ENCODE measurements at regions of chr3 and their contacts with region 1.

Region 1: DNA sequence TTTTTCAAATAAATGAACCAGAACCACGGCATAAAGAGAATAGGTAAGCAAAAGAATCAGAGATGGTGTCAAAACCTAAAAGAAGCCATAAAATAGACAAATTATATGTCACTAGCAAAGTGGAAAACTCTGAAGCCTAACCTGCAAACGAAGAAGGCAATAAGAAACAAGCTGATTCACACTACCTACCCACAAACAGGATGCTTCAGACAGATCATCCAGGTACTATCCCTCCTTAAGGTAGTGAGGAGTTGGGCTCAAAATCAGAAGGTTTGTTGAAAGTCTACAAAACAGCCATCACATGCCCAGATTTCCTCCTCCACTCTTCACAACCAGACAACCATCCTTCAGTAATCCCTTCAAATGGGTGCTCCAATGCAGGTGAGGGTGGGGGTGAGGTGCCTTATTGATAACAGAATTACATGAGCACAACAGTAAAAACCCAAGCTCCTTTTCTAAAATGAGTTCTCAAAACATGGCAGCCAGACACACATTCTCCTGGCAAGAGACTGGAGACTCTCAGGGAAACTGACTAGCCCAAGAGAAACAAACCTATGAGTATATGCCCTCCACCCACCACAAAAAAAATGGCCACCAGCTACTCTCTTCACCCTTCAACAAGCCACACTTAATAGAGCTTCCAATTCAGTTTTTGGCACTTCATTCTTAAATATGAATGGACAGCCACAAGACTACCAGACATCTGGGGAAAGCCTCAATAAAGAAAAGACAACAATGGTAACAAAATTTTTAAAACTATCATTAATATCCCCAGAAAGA is 6.4 kb downstream of the KPNA1 start:
- DNase-seq: no peak
- H3K4me3 ChIP-seq: no peak overlapping the region
- H3K27ac ChIP-seq: no peak overlapping the region
- H3K4me1 ChIP-seq: peaks cover 15% of the 10 kb centered on the region
- H3K27me3 ChIP-seq: no peaks in the 10 kb centered on the region
- CTCF ChIP-seq: no peak

Region 2: DNA sequence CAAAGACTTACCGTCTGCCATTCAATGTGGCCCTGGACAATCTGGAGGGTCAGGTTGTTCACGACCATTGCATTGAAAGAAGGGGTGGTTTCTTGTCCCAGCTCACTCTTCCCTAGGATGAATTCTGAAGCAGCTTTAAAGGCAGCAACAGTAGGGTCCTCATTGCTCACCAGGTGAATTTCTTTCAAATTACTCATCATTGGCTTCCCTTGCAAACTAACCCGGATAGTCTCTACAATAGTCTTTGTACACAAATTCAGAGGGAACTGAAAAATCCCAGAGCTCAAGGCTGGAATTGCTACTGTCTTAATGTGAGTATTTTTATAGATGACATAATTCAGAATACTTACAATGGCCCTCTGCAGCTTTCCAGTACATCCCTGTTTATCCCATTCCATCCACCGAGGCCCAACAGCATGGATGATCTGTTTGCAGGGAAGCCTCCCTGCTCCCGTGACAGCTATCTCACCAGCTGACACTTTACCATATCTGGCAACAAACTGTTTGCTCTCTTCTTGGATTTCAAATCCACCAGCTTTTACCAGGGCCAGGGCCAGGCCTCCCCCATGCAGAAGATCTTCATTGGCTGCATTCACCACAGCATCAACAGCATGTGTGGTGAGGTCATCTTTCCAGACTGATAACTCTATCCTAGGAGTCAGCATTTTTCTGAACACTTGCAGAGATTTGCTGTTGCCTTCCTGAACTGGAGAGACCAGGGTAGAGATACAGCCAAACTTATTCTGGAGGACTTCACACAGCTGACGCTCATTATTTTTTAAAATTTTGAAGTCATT is 47.1 kb after region 1 on chr3:
- CTCF ChIA-PET with region 1: no interaction called
- dilution Hi-C with region 1: no loop called
- in situ Hi-C with region 1: no loop called
- intact Hi-C with region 1: loop called (anchors 5 kb)
- DNase-seq: peak; percentile 33
- H3K4me3 ChIP-seq: no peak overlapping the region
- H3K27ac ChIP-seq: no peak overlapping the region
- H3K4me1 ChIP-seq: peaks cover 7% of the 10 kb centered on the region
- H3K27me3 ChIP-seq: no peaks in the 10 kb centered on the region
- CTCF ChIP-seq: no peak